H1 (cell line): ENCODE measurements at regions of chr16 and their contacts with region 1.

Region 1: GRCh38 chr16:80924372-80924978 is 82.2 kb downstream of the CMC2 start:
- DNase-seq: peak; percentile 66 to 88
- H3K4me3 ChIP-seq: no peak overlapping the region
- H3K27ac ChIP-seq: no peak overlapping the region
- H3K4me1 ChIP-seq: peaks cover 0 to 2% (median 0%) of the 10 kb centered on the region in 4 experiments; a peak in 2 of 7 replicates
- H3K27me3 ChIP-seq: no peaks in the 10 kb centered on the region
- CTCF ChIP-seq: peak; percentile 91 to 96 (median 93)
- EP300 ChIP-seq: no peak
- POLR2A ChIP-seq: no peak
- RAD21 ChIP-seq: peak; percentile 79 to 84

Region 2: DNA sequence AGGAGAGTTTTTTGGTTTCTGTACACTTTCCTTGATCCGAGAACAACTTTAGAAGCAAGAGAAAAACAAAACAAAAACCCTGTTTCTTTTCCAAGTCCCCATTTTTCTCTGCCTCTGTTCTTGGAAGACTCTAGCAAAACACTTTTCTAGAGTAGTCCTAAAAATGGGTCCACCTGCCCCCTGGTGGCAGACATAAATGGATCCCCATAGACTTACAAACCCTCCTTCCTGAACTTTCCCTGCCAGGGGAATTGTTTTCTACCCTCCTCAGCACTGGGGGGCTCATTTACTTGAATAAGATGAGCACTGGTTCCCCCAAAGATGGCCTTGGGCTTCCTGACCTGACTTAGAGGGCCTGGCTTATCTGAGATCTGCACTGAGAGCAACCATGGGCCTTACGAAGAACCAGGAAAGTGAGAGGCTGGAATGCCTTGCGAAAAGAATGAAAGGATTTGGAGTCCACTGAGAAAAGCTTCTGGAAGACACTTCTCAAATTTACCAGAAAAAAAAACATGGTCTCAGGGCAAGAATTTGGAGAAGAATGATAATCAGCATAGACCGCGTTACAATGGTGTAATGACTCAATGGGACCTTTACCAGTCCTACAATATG is 72.1 kb before region 1 on chr16:
- CTCF ChIA-PET with region 1: no interaction called
- POLR2A ChIA-PET with region 1: no interaction called
- DNase-seq: peak; percentile 36 to 54
- H3K4me3 ChIP-seq: no peak overlapping the region
- H3K27ac ChIP-seq: no peak overlapping the region
- H3K4me1 ChIP-seq: no peaks in the 10 kb centered on the region
- H3K27me3 ChIP-seq: no peaks in the 10 kb centered on the region
- CTCF ChIP-seq: peak; percentile 17 to 50 (median 41)
- EP300 ChIP-seq: no peak
- POLR2A ChIP-seq: no peak
- RAD21 ChIP-seq: peak; percentile 45 to 53

Region 3: GRCh38 chr16:80909720-80910119 is 14.8 kb before region 1 on chr16:
- CTCF ChIA-PET with region 1: interaction called, 12 read pairs
- POLR2A ChIA-PET with region 1: no interaction called
- DNase-seq: no peak
- H3K4me3 ChIP-seq: no peak overlapping the region
- H3K27ac ChIP-seq: no peak overlapping the region
- H3K4me1 ChIP-seq: no peaks in the 10 kb centered on the region
- H3K27me3 ChIP-seq: no peaks in the 10 kb centered on the region; a peak in 1 of 7 replicates
- CTCF ChIP-seq: no peak
- EP300 ChIP-seq: no peak
- POLR2A ChIP-seq: no peak
- RAD21 ChIP-seq: no peak

Region 4: GRCh38 chr16:80938035-80938865 is 13.8 kb after region 1 on chr16:
- CTCF ChIA-PET with region 1: interaction called, 29 read pairs
- POLR2A ChIA-PET with region 1: interaction called, 3 read pairs
- DNase-seq: no peak
- H3K4me3 ChIP-seq: no peak overlapping the region
- H3K27ac ChIP-seq: 0 out of 2 replicates have a peak overlapping the region, but pooled peaks have one; percentile 12
- H3K4me1 ChIP-seq: peaks cover 0 to 9% (median 4%) of the 10 kb centered on the region in 4 experiments; a peak in 4 of 7 replicates
- H3K27me3 ChIP-seq: peaks cover 0 to 13% (median 9%) of the 10 kb centered on the region in 4 experiments; a peak in 5 of 7 replicates
- CTCF ChIP-seq: no peak
- EP300 ChIP-seq: no peak
- POLR2A ChIP-seq: no peak
- RAD21 ChIP-seq: no peak